ENCODE measurements at regions of chr17 and their contacts with region 1.

Region 1: DNA sequence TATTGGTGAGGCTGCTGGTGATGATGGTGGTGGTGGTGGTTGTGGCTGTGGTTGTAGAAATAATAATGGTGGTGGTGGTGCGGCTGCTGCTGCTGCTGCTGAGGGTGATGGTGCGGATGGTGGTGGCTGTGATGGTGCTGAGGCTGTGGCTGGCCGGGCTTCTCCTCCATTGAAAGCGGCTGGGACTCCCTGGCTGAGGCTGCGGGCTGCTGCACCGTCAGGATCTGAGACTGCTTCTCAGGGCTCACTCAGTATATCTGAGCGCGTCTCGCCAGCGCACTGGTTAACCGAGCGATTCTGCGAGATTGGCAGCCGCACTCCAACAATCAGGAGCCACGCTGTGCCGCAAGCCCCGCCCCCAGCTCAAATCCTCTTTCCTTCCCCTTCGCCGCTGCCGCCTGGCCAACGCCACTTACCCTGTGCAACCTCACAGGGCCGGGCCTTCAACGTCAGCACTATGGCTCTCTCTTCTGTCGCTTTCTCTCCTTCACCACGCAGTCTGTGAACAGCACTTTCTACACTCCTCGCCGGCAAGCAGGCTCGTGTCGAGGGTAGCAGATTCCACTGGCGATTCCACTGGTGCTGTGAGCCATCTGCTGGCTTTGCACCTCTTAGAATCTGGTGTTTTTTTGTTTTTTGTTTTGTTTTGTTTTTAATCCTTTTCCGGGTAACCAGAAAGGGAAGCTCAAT is at the start of gene NUFIP2:
- DNase-seq: peak; percentile 93 to 98
- H3K4me3 ChIP-seq: peak within 1 kb of the TSS; percentile 92
- H3K27ac ChIP-seq: peak within 1 kb of the TSS; percentile 78
- H3K4me1 ChIP-seq: peaks cover 33% of the 10 kb centered on the region
- H3K27me3 ChIP-seq: no peaks in the 10 kb centered on the region
- CTCF ChIP-seq: no peak
- total RNA-seq, gene NUFIP2: 46.8 and 73.1 TPM in 2 replicates

Region 2: DNA sequence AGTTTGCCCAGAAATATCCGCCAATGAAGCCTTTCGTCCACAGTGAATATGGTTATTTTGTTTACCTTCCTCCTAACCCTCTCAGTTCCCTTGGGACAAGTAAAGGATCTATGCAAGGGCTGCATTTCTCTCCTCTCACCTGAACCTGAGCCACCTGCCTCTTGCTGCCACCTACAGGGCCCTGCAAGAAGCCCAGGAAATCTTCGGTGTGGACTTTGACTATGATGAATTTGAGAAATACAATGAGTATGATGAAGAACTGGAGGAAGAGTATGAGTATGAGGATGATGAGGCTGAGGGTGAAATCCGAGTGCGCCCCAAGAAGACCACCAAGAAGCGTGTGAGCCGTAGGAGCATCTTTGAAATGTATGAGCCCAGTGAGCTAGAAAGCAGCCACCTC is 618.1 kb before region 1 on chr17:
- CTCF ChIA-PET with region 1: no interaction called
- POLR2A ChIA-PET with region 1: no interaction called
- intact Hi-C with region 1: no loop called
- DNase-seq: peak in 1 of 2 experiments; percentile 17
- H3K4me3 ChIP-seq: no peak overlapping the region
- H3K27ac ChIP-seq: no peak overlapping the region
- H3K4me1 ChIP-seq: no peaks in the 10 kb centered on the region
- H3K27me3 ChIP-seq: no peaks in the 10 kb centered on the region
- CTCF ChIP-seq: peak; percentile 72

Region 3: DNA sequence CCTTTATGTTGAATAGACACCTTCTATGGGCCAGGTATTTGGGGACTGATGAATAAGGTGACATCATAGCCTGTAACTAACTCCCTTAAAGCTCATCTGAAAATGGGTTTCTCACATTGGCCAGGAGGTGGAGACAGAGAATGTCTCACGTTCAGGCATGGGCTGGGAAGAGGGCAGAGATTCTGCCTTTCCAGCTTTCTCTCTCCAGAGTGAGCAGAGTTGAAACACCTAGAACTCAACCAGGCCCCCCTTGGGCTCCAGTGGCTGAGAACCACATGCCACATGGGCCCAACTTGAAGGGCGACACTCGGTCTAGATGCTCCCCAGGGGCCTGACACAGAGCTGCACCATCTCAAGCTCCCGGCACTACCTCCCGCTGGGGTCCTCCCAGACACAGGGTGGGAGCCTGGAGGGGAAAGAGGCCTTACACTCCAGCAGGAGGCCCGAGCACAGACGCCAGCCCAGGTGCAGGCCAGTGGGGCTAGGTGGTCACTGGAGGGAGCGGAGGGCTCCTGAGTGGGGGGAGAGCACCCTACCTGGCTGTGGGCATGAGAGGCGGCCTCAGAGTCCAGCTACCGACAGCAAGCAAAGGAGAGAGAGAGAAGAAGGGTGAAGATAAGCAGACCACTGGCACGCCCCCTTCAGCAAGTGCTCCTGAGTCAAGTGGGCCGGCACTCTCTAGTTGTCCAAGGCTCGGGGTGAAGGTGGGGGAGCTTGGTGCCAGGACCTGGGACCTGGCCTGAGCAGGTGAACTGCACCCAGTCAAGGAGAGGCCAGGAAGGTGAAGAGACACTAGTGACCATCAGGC is 169.7 kb before region 1 on chr17:
- CTCF ChIA-PET with region 1: interaction called, 8 read pairs
- POLR2A ChIA-PET with region 1: interaction called, 5 read pairs
- intact Hi-C with region 1: loop called (anchors 1 kb)
- DNase-seq: peak; percentile 64 to 76
- H3K4me3 ChIP-seq: no peak overlapping the region
- H3K27ac ChIP-seq: peak overlapping the region; percentile 81
- H3K4me1 ChIP-seq: peaks cover 32% of the 10 kb centered on the region
- H3K27me3 ChIP-seq: no peaks in the 10 kb centered on the region
- CTCF ChIP-seq: peak; percentile 78

Region 4: GRCh38 chr17:29180034-29180787 is 113.8 kb before region 1 on chr17 and contains the start of gene MYO18A:
- CTCF ChIA-PET with region 1: no interaction called
- POLR2A ChIA-PET with region 1: interaction called, 6 read pairs
- intact Hi-C with region 1: loop called (anchors 2 kb)
- DNase-seq: peak; percentile 54 to 79
- H3K4me3 ChIP-seq: peak within 1 kb of the TSS; percentile 71
- H3K27ac ChIP-seq: peak within 1 kb of the TSS; percentile 97
- H3K4me1 ChIP-seq: peaks cover 47% of the 10 kb centered on the region
- H3K27me3 ChIP-seq: no peaks in the 10 kb centered on the region
- CTCF ChIP-seq: peak; percentile 78
- total RNA-seq, gene MYO18A: 150 and 158 TPM in 2 replicates

Region 5: GRCh38 chr17:29347831-29348629 is 54.0 kb after region 1 on chr17:
- CTCF ChIA-PET with region 1: no interaction called
- POLR2A ChIA-PET with region 1: interaction called, 10 read pairs
- intact Hi-C with region 1: no loop called
- DNase-seq: peak; percentile 51 to 75
- H3K4me3 ChIP-seq: no peak overlapping the region
- H3K27ac ChIP-seq: 0 out of 2 replicates have a peak overlapping the region, but pooled peaks have one; percentile 46
- H3K4me1 ChIP-seq: peaks cover 11% of the 10 kb centered on the region
- H3K27me3 ChIP-seq: no peaks in the 10 kb centered on the region
- CTCF ChIP-seq: no peak

Region 6: GRCh38 chr17:29514792-29515191 is 220.8 kb after region 1 on chr17:
- CTCF ChIA-PET with region 1: no interaction called
- POLR2A ChIA-PET with region 1: interaction called, 10 read pairs
- intact Hi-C with region 1: no loop called
- DNase-seq: no peak
- H3K4me3 ChIP-seq: no peak overlapping the region
- H3K27ac ChIP-seq: no peak overlapping the region
- H3K4me1 ChIP-seq: no peaks in the 10 kb centered on the region
- H3K27me3 ChIP-seq: no peaks in the 10 kb centered on the region
- CTCF ChIP-seq: no peak

Region 7: GRCh38 chr17:29533976-29534375 is 239.9 kb after region 1 on chr17:
- CTCF ChIA-PET with region 1: no interaction called
- POLR2A ChIA-PET with region 1: no interaction called
- intact Hi-C with region 1: no loop called
- DNase-seq: no peak
- H3K4me3 ChIP-seq: no peak overlapping the region
- H3K27ac ChIP-seq: no peak overlapping the region
- H3K4me1 ChIP-seq: no peaks in the 10 kb centered on the region
- H3K27me3 ChIP-seq: no peaks in the 10 kb centered on the region
- CTCF ChIP-seq: no peak

Region 8: DNA sequence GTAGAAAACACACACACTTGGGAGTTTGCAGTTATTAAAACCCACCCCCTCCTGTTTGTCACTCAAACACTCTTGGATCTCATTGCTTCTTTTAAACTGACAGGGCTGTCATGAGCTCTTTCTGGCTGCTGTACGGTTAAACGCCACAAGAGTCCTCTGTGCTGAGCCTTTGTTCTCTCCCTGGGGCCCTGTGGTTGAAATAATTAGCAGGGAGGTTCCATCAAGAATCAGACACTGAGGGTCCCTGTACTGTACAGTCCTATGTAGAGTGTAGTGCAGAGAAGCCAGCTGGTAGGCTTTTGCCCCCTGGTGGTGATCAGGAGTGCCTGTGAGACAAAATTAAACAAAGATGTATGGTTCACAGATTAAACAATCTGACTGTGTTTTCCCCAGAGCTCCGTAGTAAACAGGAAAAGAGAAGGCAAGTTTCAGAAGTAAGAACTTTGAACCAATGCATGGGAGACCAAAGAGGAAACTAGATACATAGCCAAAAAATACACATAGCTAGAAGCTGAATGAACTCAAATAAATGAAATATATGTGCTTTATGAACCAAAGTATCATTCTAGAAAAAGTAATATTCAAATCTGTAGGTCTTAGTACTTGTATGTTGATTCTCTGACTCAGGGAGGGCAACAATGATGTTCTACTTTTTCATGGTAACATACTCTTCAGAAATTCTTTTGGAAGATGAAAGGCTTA is 637.3 kb after region 1 on chr17:
- CTCF ChIA-PET with region 1: no interaction called
- POLR2A ChIA-PET with region 1: interaction called, 24 read pairs
- intact Hi-C with region 1: no loop called
- DNase-seq: peak; percentile 53 to 68
- H3K4me3 ChIP-seq: peak overlapping the region; percentile 73; the same call in 1 of the 2 replicates
- H3K27ac ChIP-seq: no peak overlapping the region
- H3K4me1 ChIP-seq: peaks cover 32% of the 10 kb centered on the region
- H3K27me3 ChIP-seq: no peaks in the 10 kb centered on the region
- CTCF ChIP-seq: peak; percentile 95